ENCODE measurements at regions of chr14 and their contacts with region 1.

Region 1: GRCh38 chr14:61761959-61762786 is at the start of gene SNAPC1:
- DNase-seq: peak; percentile 99
- H3K4me3 Mint-ChIP-seq: peak within 1 kb of the TSS; percentile 97
- H3K27ac Mint-ChIP-seq: peak within 1 kb of the TSS; percentile 96
- H3K4me1 Mint-ChIP-seq: peaks cover 40% of the 10 kb centered on the region
- H3K27me3 Mint-ChIP-seq: no peaks in the 10 kb centered on the region
- total RNA-seq, gene SNAPC1: 8.7 to 9.2 TPM

Region 2: GRCh38 chr14:61671082-61671481 is 91.1 kb before region 1 on chr14:
- CTCF ChIA-PET with region 1: no interaction called
- intact Hi-C with region 1: loop called (anchors 1 kb)
- DNase-seq: peak; percentile 69
- H3K4me3 Mint-ChIP-seq: peak overlapping the region; percentile 35
- H3K27ac Mint-ChIP-seq: no peak overlapping the region
- H3K4me1 Mint-ChIP-seq: peaks cover 25% of the 10 kb centered on the region
- H3K27me3 Mint-ChIP-seq: no peaks in the 10 kb centered on the region

Region 3: DNA sequence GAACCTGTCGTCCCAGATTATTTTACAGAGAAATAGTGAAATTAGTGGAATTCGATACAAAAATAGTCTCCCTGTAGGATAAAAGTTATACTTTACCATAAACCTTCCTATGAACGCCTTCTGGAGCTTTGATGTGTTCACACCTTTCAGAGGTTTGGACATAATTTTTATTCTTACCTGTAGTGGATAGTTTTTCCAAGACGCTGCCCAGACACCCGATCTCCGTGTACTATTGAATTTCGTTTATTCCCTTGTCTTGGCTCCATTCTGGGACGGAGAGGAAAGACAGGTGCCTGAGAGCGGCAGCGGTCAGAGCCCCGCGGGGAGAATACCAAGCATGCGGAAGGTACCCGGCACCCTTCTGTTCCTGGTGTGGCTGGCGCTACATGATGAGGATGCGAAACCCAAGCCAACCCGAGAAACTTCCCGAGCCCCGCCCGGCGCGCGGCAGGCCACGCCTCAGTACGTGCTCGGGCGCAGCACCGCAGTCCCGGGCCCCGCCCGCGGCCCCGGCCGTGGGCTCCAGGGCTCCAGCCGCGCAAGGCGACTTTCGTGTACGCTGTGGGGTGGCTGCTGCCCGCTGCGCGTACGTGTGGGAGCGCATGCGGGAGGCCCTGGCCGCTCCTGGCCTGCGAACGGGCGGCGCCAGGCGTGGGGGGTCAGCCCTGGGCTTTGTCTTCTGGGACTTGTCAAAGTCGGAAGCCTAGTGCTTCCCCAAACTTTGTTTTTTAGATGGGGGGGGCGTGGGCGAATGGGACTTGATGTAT is 11.3 kb before region 1 on chr14:
- CTCF ChIA-PET with region 1: interaction called, 4 read pairs
- intact Hi-C with region 1: loop called (anchors 1 kb)
- DNase-seq: peak; percentile 87
- H3K4me3 Mint-ChIP-seq: peak overlapping the region; percentile 75
- H3K27ac Mint-ChIP-seq: peak overlapping the region; percentile 75
- H3K4me1 Mint-ChIP-seq: peaks cover 24% of the 10 kb centered on the region
- H3K27me3 Mint-ChIP-seq: no peaks in the 10 kb centered on the region

Region 4: GRCh38 chr14:61780125-61780524 is 18.0 kb after region 1 on chr14:
- CTCF ChIA-PET with region 1: interaction called, 3 read pairs
- intact Hi-C with region 1: loop called (anchors 2 kb)
- DNase-seq: peak; percentile 50
- H3K4me3 Mint-ChIP-seq: no peak overlapping the region
- H3K27ac Mint-ChIP-seq: peak overlapping the region; percentile 77
- H3K4me1 Mint-ChIP-seq: peaks cover 35% of the 10 kb centered on the region
- H3K27me3 Mint-ChIP-seq: no peaks in the 10 kb centered on the region

Measured in activated naive CD4-positive, alpha-beta T cell treated with anti-CD3 and anti-CD28 coated beads for 36 hours (primary cell).